Activated CD8-positive, alpha-beta memory T cell treated with anti-CD3 and anti-CD28 coated beads, Interleukin-2, amount 10 ng/mL, durations not matched to agents 7 days and 5 days (primary cell): ENCODE measurements at regions of chr2 and their contacts with region 1.

Region 1: GRCh38 chr2:3423492-3424175 is 44.1 kb downstream of the TRAPPC12 start:
- DNase-seq: peak; percentile 77
- ATAC-seq: peak; percentile 69
- H3K4me3 Mint-ChIP-seq: no peak overlapping the region
- H3K27ac Mint-ChIP-seq: no peak overlapping the region
- H3K4me1 Mint-ChIP-seq: peaks cover 2% of the 10 kb centered on the region
- H3K27me3 Mint-ChIP-seq: no peaks in the 10 kb centered on the region

Region 2: GRCh38 chr2:3443506-3444073 is 20.0 kb after region 1 on chr2:
- CTCF ChIA-PET with region 1: interaction called, 18 read pairs
- DNase-seq: peak; percentile 35
- ATAC-seq: no peak
- H3K4me3 Mint-ChIP-seq: no peak overlapping the region
- H3K27ac Mint-ChIP-seq: no peak overlapping the region
- H3K4me1 Mint-ChIP-seq: no peaks in the 10 kb centered on the region
- H3K27me3 Mint-ChIP-seq: no peaks in the 10 kb centered on the region

Region 3: GRCh38 chr2:3651691-3652648 is 228.3 kb after region 1 on chr2:
- CTCF ChIA-PET with region 1: interaction called, 33 read pairs
- DNase-seq: peak; percentile 90
- ATAC-seq: peak; percentile 80
- H3K4me3 Mint-ChIP-seq: peak overlapping the region; percentile 75
- H3K27ac Mint-ChIP-seq: peak overlapping the region; percentile 89
- H3K4me1 Mint-ChIP-seq: peaks cover 16% of the 10 kb centered on the region
- H3K27me3 Mint-ChIP-seq: no peaks in the 10 kb centered on the region